ENCODE measurements at regions of chr17 and their contacts with region 1.

Region 1: DNA sequence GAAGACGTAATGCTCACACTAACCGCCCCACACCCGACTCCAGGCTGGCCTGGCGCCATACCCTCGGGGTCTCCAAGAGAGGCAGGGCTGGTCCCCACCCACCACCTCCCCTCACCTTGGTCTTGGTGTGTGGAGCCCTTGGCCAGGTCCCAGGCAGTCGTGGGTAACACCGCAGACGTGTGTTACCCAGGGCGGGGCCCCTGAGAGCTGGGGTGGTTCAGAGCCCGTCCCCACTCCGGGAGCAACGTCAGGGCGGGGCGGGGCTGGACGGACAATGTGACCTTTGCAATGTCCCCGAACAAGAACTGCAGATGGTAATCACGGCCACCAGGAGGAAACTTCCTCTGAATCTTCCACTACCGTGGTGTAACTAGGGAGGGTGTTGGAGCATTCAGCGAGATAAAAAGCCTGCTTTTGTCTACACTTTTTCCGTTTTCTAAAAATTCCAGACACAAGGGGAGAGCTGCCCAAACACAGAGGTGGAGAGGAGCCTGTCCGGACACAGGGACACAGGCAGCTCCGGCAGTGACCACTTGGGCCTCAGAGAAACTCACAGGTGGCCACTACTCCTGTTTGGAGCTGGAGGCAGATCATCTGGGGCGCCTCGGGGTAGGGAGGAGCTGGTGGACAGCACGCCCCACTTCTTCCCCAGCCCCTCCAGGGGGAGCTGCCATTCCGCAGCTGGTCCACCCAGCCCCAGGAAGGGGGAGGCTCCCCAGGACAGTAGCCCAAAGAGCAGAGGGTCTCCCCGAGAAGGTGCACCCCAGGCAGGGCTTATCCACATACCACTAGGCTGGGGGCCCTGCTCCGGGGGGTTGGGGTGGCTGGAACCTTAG is 14.2 kb upstream of the SLC38A10 start:
- DNase-seq: peak; percentile 34
- H3K4me3 Mint-ChIP-seq: no peak overlapping the region
- H3K27ac Mint-ChIP-seq: no peak overlapping the region
- H3K4me1 Mint-ChIP-seq: peaks cover 4% of the 10 kb centered on the region
- H3K27me3 Mint-ChIP-seq: peaks cover 2% of the 10 kb centered on the region

Region 2: DNA sequence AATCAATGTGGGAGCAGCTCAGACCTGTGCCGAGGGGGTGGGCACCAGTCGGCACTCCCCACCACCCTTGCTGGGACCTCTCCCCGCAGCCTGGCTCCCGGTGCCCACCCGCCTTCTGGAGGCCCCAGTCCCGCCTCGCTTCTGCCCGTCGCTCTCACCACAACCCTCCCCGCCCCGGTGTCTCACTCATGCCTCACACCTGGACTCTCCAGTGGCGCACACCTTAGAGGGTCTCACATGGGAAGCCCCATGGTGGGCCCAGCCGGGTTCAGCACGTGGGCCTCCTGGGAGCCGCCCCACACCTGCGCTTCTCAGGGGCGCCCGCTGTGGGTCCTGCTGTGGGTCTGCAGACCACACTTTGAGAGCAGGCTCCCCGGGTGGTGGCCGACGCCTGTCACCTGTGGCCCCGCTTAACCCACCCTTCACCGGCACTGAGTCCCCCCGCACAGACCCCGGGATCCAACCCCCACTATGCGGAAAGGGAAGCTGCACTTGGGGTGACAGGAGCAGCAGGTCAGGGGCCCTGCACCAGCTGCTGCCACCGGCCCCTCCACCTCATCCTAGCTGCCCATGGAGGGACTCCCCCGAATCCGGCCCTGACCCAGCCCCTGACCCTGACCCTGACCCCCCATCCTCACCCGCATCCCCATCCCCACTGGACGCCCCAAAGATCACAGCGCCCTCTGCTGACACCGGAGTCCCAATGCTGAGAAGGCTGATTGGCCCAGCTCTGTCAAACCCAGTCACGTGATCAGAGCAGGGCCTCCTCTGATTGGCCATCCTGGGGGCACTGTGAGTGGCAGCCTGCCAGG is 13.2 kb after region 1 on chr17:
- CTCF ChIA-PET with region 1: interaction called, 10 read pairs
- POLR2A ChIA-PET with region 1: no interaction called
- DNase-seq: peak; percentile 53
- H3K4me3 Mint-ChIP-seq: no peak overlapping the region
- H3K27ac Mint-ChIP-seq: no peak overlapping the region
- H3K4me1 Mint-ChIP-seq: no peaks in the 10 kb centered on the region
- H3K27me3 Mint-ChIP-seq: no peaks in the 10 kb centered on the region

Measured in activated CD4-positive, alpha-beta T cell treated with anti-CD3 and anti-CD28 coated beads, Interleukin-2, amount 10 ng/mL, durations not matched to agents 7 days and 5 days (primary cell).